GM12878 (cell line): ENCODE measurements at regions of chr14 and their contacts with region 1.

Region 1: GRCh38 chr14:106790189-106791036 is 1264.0 kb downstream of the TMEM121 start:
- DNase-seq: no peak
- ATAC-seq: peak; percentile 92
- H3K4me3 ChIP-seq: no peak overlapping the region
- H3K27ac ChIP-seq: no peak overlapping the region
- H3K4me1 ChIP-seq: no peaks in the 10 kb centered on the region
- H3K27me3 ChIP-seq: no peaks in the 10 kb centered on the region
- CTCF ChIP-seq: peak; percentile 72 to 95 (median 93)
- EP300 ChIP-seq: no peak
- POLR2A ChIP-seq: no peak
- RAD21 ChIP-seq: peak; percentile 82

Region 2: DNA sequence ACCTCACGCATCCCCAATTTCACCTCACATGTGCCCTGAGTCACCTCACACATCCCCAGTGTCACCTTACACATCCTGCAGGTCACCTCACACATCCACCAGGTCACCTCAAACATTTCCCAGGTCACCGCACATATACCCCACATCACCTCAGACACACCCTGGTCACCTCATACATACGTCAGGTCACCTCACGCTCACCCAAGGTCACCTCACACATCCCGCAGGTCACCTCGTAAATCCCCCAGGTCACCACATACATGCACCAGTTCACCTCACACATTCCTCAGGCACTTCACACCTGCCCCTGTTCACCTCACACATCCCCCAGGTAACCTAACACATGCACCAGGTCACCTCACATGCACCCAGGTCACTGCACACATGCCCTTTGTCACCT is 400.0 kb before region 1 on chr14:
- CTCF ChIA-PET with region 1: no interaction called
- POLR2A ChIA-PET with region 1: no interaction called
- RAD21 ChIA-PET with region 1: no interaction called
- SMC1A ChIA-PET with region 1: no interaction called
- in situ Hi-C with region 1: no loop called
- intact Hi-C with region 1: no loop called
- DNase-seq: no peak
- ATAC-seq: no peak
- H3K4me3 ChIP-seq: no peak overlapping the region
- H3K27ac ChIP-seq: no peak overlapping the region
- H3K4me1 ChIP-seq: no peaks in the 10 kb centered on the region
- H3K27me3 ChIP-seq: peaks cover 0 to 3% of the 10 kb centered on the region in 2 experiments; a peak in 1 of 4 replicates
- CTCF ChIP-seq: no peak
- EP300 ChIP-seq: no peak
- POLR2A ChIP-seq: no peak
- RAD21 ChIP-seq: no peak

Region 3: GRCh38 chr14:106506881-106507305 is 283.5 kb before region 1 on chr14:
- CTCF ChIA-PET with region 1: no interaction called
- POLR2A ChIA-PET with region 1: no interaction called
- RAD21 ChIA-PET with region 1: no interaction called
- SMC1A ChIA-PET with region 1: no interaction called
- in situ Hi-C with region 1: no loop called
- intact Hi-C with region 1: no loop called
- DNase-seq: no peak
- ATAC-seq: peak; percentile 57
- H3K4me3 ChIP-seq: no peak overlapping the region
- H3K27ac ChIP-seq: no peak overlapping the region
- H3K4me1 ChIP-seq: no peaks in the 10 kb centered on the region
- H3K27me3 ChIP-seq: peaks cover 2 to 5% of the 10 kb centered on the region in 2 experiments; a peak in 3 of 4 replicates
- CTCF ChIP-seq: no peak
- EP300 ChIP-seq: no peak
- POLR2A ChIP-seq: no peak
- RAD21 ChIP-seq: no peak

Region 4: DNA sequence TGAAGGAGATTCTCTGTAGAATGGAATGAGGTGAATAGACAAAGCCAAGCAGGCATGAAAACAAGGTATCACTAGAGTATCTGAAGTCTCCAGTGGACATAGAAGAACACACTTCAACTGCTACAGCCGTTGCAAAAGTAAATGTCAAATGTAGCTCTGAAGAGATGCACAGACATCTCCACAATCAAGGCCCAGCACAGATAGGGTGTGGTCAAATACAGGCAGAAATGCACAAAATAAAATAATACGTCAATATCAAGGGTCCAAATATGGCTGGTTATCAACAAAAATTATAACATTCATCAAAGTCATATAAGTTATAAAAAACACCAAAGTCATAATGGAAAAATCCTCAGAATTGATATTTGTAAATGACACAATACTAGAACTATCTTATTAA is 156.7 kb before region 1 on chr14:
- CTCF ChIA-PET with region 1: no interaction called
- POLR2A ChIA-PET with region 1: no interaction called
- RAD21 ChIA-PET with region 1: no interaction called
- SMC1A ChIA-PET with region 1: no interaction called
- in situ Hi-C with region 1: no loop called
- intact Hi-C with region 1: no loop called
- DNase-seq: no peak
- ATAC-seq: no peak
- H3K4me3 ChIP-seq: no peak overlapping the region
- H3K27ac ChIP-seq: no peak overlapping the region
- H3K4me1 ChIP-seq: no peaks in the 10 kb centered on the region
- H3K27me3 ChIP-seq: peaks cover 0 to 3% of the 10 kb centered on the region in 2 experiments; a peak in 3 of 4 replicates
- CTCF ChIP-seq: no peak
- EP300 ChIP-seq: no peak
- POLR2A ChIP-seq: no peak
- RAD21 ChIP-seq: no peak

Region 5: DNA sequence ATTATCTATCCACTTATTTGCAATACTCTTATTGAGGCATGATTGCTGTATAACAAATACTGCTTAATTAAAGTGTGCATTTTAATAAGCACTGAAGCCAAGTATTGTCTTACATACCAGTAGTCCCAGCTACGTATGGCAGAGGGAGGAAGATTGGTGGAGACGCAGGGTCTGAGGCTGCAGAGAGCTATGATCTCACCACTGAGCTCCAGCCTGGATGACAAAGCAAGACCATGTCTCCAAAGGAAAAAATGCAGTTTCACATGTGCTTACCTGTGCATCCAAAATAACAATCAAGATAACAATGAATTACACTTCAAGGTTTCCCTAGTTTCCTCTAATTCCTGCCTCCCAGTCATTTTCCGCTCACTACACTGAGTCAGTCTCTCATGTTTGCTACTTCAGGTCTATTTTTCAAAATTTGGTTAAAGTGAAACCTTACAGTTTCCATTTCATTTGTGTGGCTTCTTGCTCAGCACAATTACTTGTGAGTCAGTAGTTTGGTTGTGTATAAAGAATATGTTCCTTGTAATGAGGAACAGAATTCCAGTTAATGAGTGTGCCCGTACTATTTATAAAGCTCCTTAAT is 13.9 kb before region 1 on chr14:
- CTCF ChIA-PET with region 1: interaction called, 36 read pairs
- POLR2A ChIA-PET with region 1: no interaction called
- RAD21 ChIA-PET with region 1: interaction called, 3 read pairs
- SMC1A ChIA-PET with region 1: interaction called, 5 read pairs
- in situ Hi-C with region 1: no loop called
- intact Hi-C with region 1: no loop called
- DNase-seq: no peak
- ATAC-seq: 0 out of 3 replicates have a peak, but pooled peaks have one; percentile 16
- H3K4me3 ChIP-seq: no peak overlapping the region
- H3K27ac ChIP-seq: no peak overlapping the region
- H3K4me1 ChIP-seq: peaks cover 8% of the 10 kb centered on the region
- H3K27me3 ChIP-seq: no peaks in the 10 kb centered on the region
- CTCF ChIP-seq: no peak
- EP300 ChIP-seq: no peak
- POLR2A ChIP-seq: no peak
- RAD21 ChIP-seq: no peak

Region 6: GRCh38 chr14:106823552-106823951 is 33.1 kb after region 1 on chr14:
- CTCF ChIA-PET with region 1: interaction called, 16 read pairs
- POLR2A ChIA-PET with region 1: no interaction called
- RAD21 ChIA-PET with region 1: no interaction called
- SMC1A ChIA-PET with region 1: interaction called, 3 read pairs
- in situ Hi-C with region 1: no loop called
- intact Hi-C with region 1: no loop called
- DNase-seq: no peak
- ATAC-seq: no peak
- H3K4me3 ChIP-seq: no peak overlapping the region
- H3K27ac ChIP-seq: no peak overlapping the region
- H3K4me1 ChIP-seq: peaks cover 20% of the 10 kb centered on the region
- H3K27me3 ChIP-seq: no peaks in the 10 kb centered on the region; a peak in 1 of 4 replicates
- CTCF ChIP-seq: no peak
- EP300 ChIP-seq: no peak
- POLR2A ChIP-seq: no peak
- RAD21 ChIP-seq: no peak